ENCODE measurements at regions of chr10 and their contacts with region 1.

Region 1: GRCh38 chr10:22765660-22766547 is 51.5 kb upstream of the PIP4K2A start:
- DNase-seq: peak; percentile 76
- H3K4me3 ChIP-seq: peak overlapping the region; percentile 31
- H3K27ac ChIP-seq: peak overlapping the region; percentile 68
- H3K4me1 ChIP-seq: peaks cover 27% of the 10 kb centered on the region
- CTCF ChIP-seq: no peak

Region 2: GRCh38 chr10:22630234-22631174 is 135.4 kb before region 1 on chr10:
- CTCF ChIA-PET with region 1: no interaction called
- POLR2A ChIA-PET with region 1: no interaction called
- intact Hi-C with region 1: loop called (anchors 5 kb)
- DNase-seq: peak; percentile 41
- H3K4me3 ChIP-seq: peak overlapping the region; percentile 45
- H3K27ac ChIP-seq: peak overlapping the region; percentile 30
- H3K4me1 ChIP-seq: peaks cover 24% of the 10 kb centered on the region
- CTCF ChIP-seq: no peak

Measured in OCI-LY7 (cell line).